GM18951 (cell line): ENCODE measurements at regions of chr1 and their contacts with region 1.

Region 1: DNA sequence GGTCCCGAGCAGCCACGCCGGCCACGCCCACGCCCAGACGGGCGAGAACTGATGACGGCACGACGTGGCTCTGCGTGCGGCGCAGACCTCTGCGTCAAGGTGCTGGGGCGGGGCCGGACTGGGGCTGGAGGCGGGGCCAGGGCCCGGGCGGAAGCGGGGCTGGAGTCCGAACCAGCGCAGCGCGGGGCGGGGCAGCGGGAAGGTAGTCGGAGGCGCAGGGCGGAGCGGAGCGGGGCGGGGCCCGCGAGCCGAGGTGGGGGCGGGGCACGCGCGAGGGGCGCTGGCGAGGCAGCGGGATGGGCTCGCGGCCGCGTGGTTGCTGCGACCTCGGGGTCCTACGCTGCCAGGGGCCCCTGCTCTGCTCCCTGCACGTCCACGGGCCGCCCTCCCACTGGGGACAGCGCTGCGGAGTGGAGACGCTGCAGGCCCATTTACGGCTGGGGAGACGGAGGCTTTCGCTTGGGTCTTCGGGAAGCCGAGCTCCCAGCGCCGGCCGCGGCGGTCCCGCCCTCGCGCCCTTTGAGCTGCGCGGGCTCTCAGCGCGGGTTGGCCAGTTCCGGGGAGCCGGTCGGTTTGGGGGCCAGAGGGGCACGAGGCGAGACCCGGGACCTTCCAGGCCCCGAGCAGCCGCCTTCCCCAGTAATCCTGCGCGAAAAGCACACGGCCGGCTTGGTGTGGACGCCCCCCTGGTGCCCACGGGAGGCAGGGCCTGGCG is at the start of gene PEX10:
- POLR2A ChIP-seq: peak; percentile 68

Region 2: DNA sequence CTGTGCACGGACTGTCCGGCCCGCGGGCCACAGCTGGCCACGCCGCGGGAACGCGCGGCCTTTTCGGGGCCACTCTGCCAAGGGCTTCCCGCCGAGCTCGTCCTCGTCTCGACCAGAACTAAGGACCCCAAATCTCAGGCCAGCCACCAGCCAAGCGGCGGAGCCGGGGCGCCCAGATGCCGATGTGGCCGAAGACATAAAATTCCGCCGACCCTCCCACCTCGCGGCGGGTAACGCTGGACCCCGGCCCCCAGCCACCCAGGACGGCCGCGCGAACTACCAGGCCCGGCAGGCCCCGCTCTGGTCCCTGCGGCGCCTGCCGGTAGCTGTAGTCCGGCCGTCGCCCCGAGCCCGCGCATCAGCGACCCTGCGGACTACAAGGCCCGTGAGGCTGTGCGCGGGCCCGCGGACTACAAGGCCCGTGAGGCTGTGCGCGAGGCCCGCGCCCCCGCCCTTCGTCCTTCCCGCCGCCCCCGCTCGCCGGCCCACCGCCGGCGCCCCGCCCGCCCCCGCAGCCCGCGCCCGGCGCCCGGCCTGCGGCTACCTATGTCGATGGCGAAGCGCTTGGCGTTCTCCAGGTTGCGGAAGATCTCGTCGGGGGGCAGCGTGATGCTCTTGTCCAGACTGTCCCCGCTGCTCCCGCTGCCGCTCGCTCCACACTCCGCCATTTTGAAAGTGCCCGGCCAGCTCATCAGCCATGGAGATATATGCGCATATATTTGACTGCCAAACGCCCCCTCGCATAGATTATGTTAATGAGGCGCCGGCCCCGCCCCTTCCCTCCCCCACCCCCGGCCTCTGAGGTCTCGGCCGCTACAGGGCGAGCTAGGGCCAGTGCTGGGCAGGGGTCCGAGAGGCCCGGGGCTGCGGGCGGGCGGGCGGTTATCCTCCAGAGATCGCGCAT is 113.5 kb after region 1 on chr1 and contains the start of gene PANK4:
- in situ Hi-C with region 1: loop called (anchors 25 kb)
- POLR2A ChIP-seq: peak; percentile 79

Region 3: GRCh38 chr1:3431266-3431665 is 1018.6 kb after region 1 on chr1:
- in situ Hi-C with region 1: loop called (anchors 25 kb)
- POLR2A ChIP-seq: no peak